Transverse colon (tissue), 4 donors: ENCODE measurements at regions of chr4 and their contacts with region 1.

Region 1: GRCh38 chr4:2468445-2469192 is at the start of gene RNF4:
- DNase-seq: peak; percentile 98
- H3K4me3 ChIP-seq: peak within 1 kb of the TSS; percentile 81 to 99 (median 96)
- H3K27ac ChIP-seq: peak within 1 kb of the TSS; percentile 97 to 99 (median 98)
- H3K4me1 ChIP-seq: peaks cover 11 to 33% (median 26%) of the 10 kb centered on the region in 4 donors
- H3K27me3 ChIP-seq: no peaks in the 10 kb centered on the region
- CTCF ChIP-seq: peak in 1 of 5 experiments; percentile 8
- EP300 ChIP-seq: no peak
- POLR2A ChIP-seq: peak; percentile 87
- total RNA-seq, gene RNF4: 20.9 to 50.5 (median 35.8) TPM

Region 2: GRCh38 chr4:2024683-2025082 is 443.9 kb before region 1 on chr4:
- in situ Hi-C with region 1: no loop called
- intact Hi-C with region 1: no loop called
- DNase-seq: no peak
- H3K4me3 ChIP-seq: no peak overlapping the region
- H3K27ac ChIP-seq: no peak overlapping the region
- H3K4me1 ChIP-seq: peaks cover 0 to 11% (median 0%) of the 10 kb centered on the region in 4 donors
- H3K27me3 ChIP-seq: peaks cover 21% of the 10 kb centered on the region
- CTCF ChIP-seq: no peak
- EP300 ChIP-seq: no peak
- POLR2A ChIP-seq: no peak

Region 3: DNA sequence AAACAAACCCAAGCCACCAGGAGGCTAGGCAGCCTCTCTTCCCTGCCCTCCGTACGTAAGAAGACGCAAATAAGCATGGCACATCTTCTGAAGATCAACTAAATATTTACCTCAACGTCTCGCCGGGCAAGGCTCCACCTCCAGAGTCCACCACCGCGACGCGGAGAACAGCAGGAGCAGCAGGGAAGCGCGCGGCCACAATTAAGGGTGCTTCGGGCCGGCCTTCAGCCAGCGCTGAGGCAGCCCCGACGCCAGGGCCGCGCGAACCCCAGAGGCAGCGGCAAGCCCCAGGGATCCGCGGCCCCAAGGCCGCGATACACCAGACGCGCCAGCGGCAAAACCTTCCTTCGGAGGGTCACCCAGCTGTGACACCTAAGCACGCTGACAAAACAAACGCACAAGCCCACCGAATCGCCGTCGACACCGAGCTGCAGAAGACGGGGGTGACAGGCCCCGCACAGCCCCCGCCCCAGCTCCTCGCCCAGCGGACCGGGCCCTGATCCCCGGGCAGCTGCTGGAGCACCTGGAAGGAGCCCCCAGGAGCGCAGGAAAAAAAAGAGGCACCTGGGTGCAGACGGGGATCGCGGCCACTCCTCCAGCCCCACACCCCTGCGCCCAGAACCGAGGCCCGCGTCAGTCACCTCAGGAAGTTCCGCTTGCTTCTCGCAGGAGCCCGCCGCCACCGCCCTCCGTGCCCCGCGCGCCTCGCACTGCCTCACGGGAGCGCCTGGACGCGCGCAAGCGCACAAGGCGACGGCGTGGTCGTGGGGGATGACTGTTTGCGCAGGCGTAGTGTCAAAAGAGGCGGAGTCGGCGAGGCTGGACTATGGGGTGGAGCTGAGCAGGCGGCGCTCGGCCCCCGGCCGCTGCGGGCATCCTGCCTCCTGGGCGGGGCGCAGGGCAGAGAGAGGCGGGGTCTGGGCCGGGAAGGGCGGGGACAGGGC is 226.9 kb before region 1 on chr4 and contains the starts of genes HAUS3 and POLN:
- in situ Hi-C with region 1: loop called in 1 of 4 experiments (anchors 25 kb)
- intact Hi-C with region 1: no loop called
- DNase-seq: peak; percentile 99
- H3K4me3 ChIP-seq: peak within 1 kb of the TSS; percentile 74 to 99 (median 94)
- H3K27ac ChIP-seq: peak within 1 kb of the TSS; percentile 90 to 97 (median 94)
- H3K4me1 ChIP-seq: peaks cover 28 to 71% (median 52%) of the 10 kb centered on the region in 4 donors
- H3K27me3 ChIP-seq: no peaks in the 10 kb centered on the region
- CTCF ChIP-seq: peak in 3 of 5 experiments; percentile 9 to 25 (median 10)
- EP300 ChIP-seq: no peak
- POLR2A ChIP-seq: peak; percentile 89
- total RNA-seq, gene HAUS3: 2.0 to 18.0 (median 11.3) TPM
- total RNA-seq, gene POLN: 0.27 to 2.6 (median 1.4) TPM

Region 4: DNA sequence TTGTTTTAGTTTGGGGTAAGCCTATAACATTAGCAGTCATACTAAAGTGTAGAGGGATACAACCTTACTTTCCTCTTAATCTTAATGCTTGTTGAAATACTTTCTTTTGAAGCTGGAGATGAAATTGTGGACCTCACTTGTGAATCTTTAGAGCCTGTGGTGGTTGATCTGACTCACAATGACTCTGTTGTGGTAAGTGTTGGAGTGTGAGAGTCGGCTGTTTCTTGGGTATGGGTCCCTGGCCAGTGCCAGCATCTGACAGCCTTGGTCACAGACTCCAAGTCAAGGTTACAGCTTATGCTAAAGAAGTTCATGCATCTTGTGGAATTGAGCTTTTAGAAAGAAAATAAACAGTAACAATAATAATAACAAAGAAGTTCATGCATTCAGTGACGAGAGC is 31.9 kb after region 1 on chr4:
- in situ Hi-C with region 1: no loop called
- intact Hi-C with region 1: loop called (anchors 1 kb)
- DNase-seq: no peak
- H3K4me3 ChIP-seq: no peak overlapping the region
- H3K27ac ChIP-seq: no peak overlapping the region
- H3K4me1 ChIP-seq: peaks cover 0 to under 1% (median 0%) of the 10 kb centered on the region in 4 donors
- H3K27me3 ChIP-seq: no peaks in the 10 kb centered on the region
- CTCF ChIP-seq: no peak
- EP300 ChIP-seq: no peak
- POLR2A ChIP-seq: no peak

Region 5: DNA sequence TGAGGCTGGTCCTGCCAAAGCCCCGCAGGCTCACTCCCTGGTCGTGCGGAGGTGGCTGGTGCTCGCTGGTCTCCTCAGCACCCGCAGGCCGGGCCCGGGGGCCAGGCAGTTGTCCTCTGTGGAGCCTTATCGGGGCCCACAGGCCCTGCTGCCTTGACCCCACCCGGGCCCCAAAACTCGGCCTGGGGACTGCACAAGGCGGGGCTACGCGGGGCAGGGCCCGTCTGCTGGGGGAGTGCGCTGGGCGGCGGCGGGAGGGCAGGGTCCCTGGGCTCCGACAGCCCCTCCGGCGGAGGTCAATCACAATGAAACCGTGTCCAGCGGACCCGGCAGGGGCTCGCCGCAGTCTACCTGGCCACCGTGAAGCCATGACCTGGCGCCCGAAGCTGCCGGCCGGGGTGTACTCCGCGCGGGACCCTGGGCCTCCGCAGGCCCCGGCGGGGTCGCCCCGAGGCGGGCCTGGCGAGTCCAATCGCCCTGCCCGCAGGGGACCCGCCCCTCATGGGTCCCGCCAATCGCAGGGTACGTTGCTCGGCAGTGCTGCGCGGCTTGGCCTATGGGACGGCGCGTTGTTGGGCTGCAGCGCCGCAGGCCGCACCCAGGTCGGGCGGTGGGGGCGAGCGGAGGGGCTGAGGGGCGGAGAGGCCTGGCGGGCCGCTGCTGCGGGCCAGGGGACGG is 374.8 kb after region 1 on chr4 and contains the start of gene ADD1:
- in situ Hi-C with region 1: no loop called
- intact Hi-C with region 1: no loop called
- DNase-seq: peak; percentile 95
- H3K4me3 ChIP-seq: peak within 1 kb of the TSS; percentile 78 to 98 (median 84)
- H3K27ac ChIP-seq: peak within 1 kb of the TSS; percentile 90 to 95 (median 94)
- H3K4me1 ChIP-seq: peaks cover 18 to 48% (median 27%) of the 10 kb centered on the region in 4 donors
- H3K27me3 ChIP-seq: no peaks in the 10 kb centered on the region
- CTCF ChIP-seq: no peak
- EP300 ChIP-seq: no peak
- POLR2A ChIP-seq: peak; percentile 92
- total RNA-seq, gene ADD1: 218 to 392 (median 299) TPM

Region 6: GRCh38 chr4:2893772-2894171 is 425.2 kb after region 1 on chr4:
- in situ Hi-C with region 1: no loop called
- intact Hi-C with region 1: no loop called
- DNase-seq: no peak
- H3K4me3 ChIP-seq: no peak overlapping the region
- H3K27ac ChIP-seq: no peak overlapping the region
- H3K4me1 ChIP-seq: peaks cover 0 to 22% (median 13%) of the 10 kb centered on the region in 4 donors
- H3K27me3 ChIP-seq: no peaks in the 10 kb centered on the region
- CTCF ChIP-seq: no peak
- EP300 ChIP-seq: no peak
- POLR2A ChIP-seq: no peak